ENCODE measurements at regions of chr9 and their contacts with region 1.

Region 1: DNA sequence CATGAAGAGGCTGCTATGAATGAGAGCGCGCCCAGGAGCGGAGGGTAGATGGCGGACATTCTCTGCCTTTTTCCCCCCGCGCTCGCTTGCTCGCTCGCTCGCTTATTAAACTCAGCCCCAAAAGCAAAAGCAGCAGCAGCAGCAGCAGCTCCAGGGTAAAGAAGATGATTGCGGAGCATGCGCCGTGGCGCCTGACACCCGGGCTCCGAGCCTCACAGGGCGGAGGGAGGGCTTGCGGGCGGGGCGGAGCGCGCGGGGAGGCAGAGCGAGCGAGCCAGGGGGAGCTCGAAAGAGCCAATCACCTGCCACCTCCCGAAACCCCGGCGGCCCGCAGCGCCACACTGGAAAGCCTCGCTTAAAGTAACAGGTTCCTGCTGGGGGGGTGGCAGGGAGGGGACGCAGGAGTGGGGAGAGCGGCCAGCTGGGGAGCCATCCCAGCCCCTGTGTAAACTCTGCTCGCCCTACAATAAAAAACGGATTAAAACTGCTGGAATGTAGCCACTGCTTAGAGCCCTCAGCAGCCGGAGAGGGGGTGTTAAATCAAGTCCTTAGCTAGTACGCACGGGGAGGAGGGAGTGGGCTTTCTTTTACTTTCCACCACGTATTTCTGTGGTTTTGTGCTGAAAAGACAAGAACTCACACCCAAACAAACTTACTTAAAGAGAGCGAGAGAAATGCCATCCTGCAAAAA is at the start of gene MLLT3:
- DNase-seq: peak; percentile 95 to 98
- ATAC-seq: peak; percentile 80 to 91 (median 85)
- H3K4me3 ChIP-seq: peak within 1 kb of the TSS; percentile 92
- H3K4me3 Mint-ChIP-seq: peak within 1 kb of the TSS; percentile 95
- H3K27ac ChIP-seq: peak within 1 kb of the TSS; percentile 73
- H3K27ac Mint-ChIP-seq: peak within 1 kb of the TSS; percentile 83 to 84
- H3K4me1 ChIP-seq: peaks cover 22% of the 10 kb centered on the region
- H3K4me1 Mint-ChIP-seq: peaks cover 40 to 41% of the 10 kb centered on the region in 2 donors
- H3K27me3 ChIP-seq: no peaks in the 10 kb centered on the region
- H3K27me3 Mint-ChIP-seq: no peaks in the 10 kb centered on the region
- CTCF ChIP-seq: no peak
- total RNA-seq, gene MLLT3: 24.3 to 26.6 (median 25.2) TPM

Region 2: GRCh38 chr9:19925817-19926503 is 696.5 kb before region 1 on chr9:
- intact Hi-C with region 1: loop called (anchors 2 kb)
- DNase-seq: peak; percentile 54 to 90
- ATAC-seq: peak; percentile 93 to 100 (median 99)
- H3K4me3 ChIP-seq: no peak overlapping the region
- H3K4me3 Mint-ChIP-seq: peak overlapping the region; percentile 60
- H3K27ac ChIP-seq: no peak overlapping the region
- H3K27ac Mint-ChIP-seq: no peak overlapping the region
- H3K4me1 ChIP-seq: peaks cover 6% of the 10 kb centered on the region
- H3K4me1 Mint-ChIP-seq: peaks cover 8% of the 10 kb centered on the region in 2 donors
- H3K27me3 ChIP-seq: no peaks in the 10 kb centered on the region
- H3K27me3 Mint-ChIP-seq: peaks cover 8 to 51% of the 10 kb centered on the region in 2 donors
- CTCF ChIP-seq: peak; percentile 96

Region 3: DNA sequence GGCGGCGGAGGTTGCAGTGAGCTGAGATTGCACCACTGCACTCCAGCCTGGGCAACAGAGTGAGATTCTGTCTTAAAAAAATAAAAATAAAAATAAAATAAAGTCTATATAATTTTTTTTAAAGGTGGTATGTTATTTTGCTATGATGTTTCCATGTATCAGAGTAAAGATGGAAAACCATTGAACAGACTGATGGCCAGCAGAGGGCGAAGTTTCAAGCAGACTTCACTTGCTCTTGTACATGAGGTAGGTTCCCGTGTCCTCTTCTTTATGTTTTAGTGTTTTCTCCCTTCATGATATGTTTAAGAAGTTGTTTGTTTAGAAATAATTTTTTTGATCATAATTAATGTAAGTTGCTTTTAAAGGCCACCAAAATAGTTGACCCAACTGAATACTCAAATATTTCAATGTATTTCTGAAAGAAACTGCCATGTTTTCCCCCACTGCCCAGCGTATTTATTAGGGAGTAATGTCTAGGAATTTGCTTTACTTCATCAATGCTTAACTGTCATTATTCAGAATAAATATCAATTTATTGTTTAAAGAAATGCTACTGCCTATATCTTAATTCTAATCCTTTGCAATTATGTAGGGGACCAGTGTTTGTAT is 262.6 kb after region 1 on chr9:
- intact Hi-C with region 1: loop called (anchors 10 kb)
- DNase-seq: peak; percentile 34 to 76
- ATAC-seq: peak in 2 of 3 donors; percentile 60 to 64
- H3K4me3 ChIP-seq: no peak overlapping the region
- H3K4me3 Mint-ChIP-seq: no peak overlapping the region
- H3K27ac ChIP-seq: no peak overlapping the region
- H3K27ac Mint-ChIP-seq: no peak overlapping the region
- H3K4me1 ChIP-seq: no peaks in the 10 kb centered on the region
- H3K4me1 Mint-ChIP-seq: no peaks in the 10 kb centered on the region
- H3K27me3 ChIP-seq: no peaks in the 10 kb centered on the region
- H3K27me3 Mint-ChIP-seq: no peaks in the 10 kb centered on the region
- CTCF ChIP-seq: peak; percentile 79

Region 4: GRCh38 chr9:21001581-21001980 is 379.1 kb after region 1 on chr9:
- intact Hi-C with region 1: loop called (anchors 2 kb)
- DNase-seq: peak in 1 of 2 donors; percentile 38
- ATAC-seq: peak; percentile 79 to 85 (median 85)
- H3K4me3 ChIP-seq: no peak overlapping the region
- H3K4me3 Mint-ChIP-seq: peak overlapping the region; percentile 62
- H3K27ac ChIP-seq: peak overlapping the region; percentile 76
- H3K27ac Mint-ChIP-seq: peak overlapping the region; percentile 90 to 96
- H3K4me1 ChIP-seq: no peaks in the 10 kb centered on the region
- H3K4me1 Mint-ChIP-seq: peaks cover 30 to 38% of the 10 kb centered on the region in 2 donors
- H3K27me3 ChIP-seq: no peaks in the 10 kb centered on the region
- H3K27me3 Mint-ChIP-seq: no peaks in the 10 kb centered on the region
- CTCF ChIP-seq: no peak

Region 5: DNA sequence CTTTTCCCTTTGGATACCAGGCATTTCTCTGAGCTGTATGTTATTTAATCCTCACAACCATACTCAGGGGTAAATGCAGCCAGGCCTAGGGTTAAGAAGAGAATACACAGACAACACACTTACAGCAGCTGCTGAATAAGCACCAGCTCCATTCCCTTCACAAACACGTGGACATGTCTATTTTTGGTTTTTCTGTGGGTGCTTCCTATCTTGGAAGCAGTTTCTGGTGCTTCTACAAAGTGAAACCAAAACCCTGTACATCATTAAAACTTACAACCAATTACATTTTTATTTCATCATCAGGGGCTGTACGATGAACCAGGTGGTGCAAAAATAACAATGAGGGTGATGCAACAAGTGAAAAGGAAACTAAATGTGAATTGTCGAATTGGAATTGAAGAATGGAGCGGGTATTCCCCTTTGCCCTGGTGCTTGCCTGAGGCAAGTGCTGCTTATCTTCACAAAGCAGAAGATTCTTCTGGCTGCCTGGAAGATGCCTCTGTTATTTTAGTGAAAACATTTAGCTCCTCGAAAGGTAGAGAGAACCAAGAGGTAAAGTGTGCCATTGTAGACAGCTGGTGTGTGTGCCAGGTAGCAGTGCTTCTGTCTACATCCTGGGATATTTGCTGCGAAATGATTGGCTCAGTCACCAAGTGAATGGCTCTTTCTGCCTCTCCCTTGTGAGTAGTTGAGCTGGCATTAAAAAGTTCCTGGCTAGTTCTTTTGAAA is 473.9 kb after region 1 on chr9:
- intact Hi-C with region 1: loop called (anchors 5 kb)
- DNase-seq: peak; percentile 23 to 85
- ATAC-seq: peak; percentile 96 to 98 (median 96)
- H3K4me3 ChIP-seq: peak overlapping the region; percentile 16
- H3K4me3 Mint-ChIP-seq: peak overlapping the region; percentile 86
- H3K27ac ChIP-seq: peak overlapping the region; percentile 86
- H3K27ac Mint-ChIP-seq: peak overlapping the region; percentile 96 to 97
- H3K4me1 ChIP-seq: peaks cover 13% of the 10 kb centered on the region
- H3K4me1 Mint-ChIP-seq: peaks cover 35 to 37% of the 10 kb centered on the region in 2 donors
- H3K27me3 ChIP-seq: no peaks in the 10 kb centered on the region
- H3K27me3 Mint-ChIP-seq: no peaks in the 10 kb centered on the region
- CTCF ChIP-seq: no peak

Measured in natural killer cell (primary cell).